PC-3 (cell line): ENCODE measurements at regions of chr3 and their contacts with region 1.

Region 1: GRCh38 chr3:84265768-84266167 is 693.0 kb upstream of the CADM2 start:
- DNase-seq: peak; percentile 93
- ATAC-seq: peak; percentile 98
- H3K4me3 ChIP-seq: no peak overlapping the region
- H3K27ac ChIP-seq: peak overlapping the region; percentile 98
- H3K4me1 ChIP-seq: peaks cover 14% of the 10 kb centered on the region
- H3K27me3 ChIP-seq: no peaks in the 10 kb centered on the region
- CTCF ChIP-seq: no peak

Region 2: GRCh38 chr3:83882701-83883100 is 383.1 kb before region 1 on chr3:
- CTCF ChIA-PET with region 1: no interaction called
- POLR2A ChIA-PET with region 1: no interaction called
- intact Hi-C with region 1: loop called (anchors 5 kb)
- DNase-seq: peak; percentile 81
- ATAC-seq: peak; percentile 96
- H3K4me3 ChIP-seq: peak overlapping the region; percentile 40; the same call in 1 of the 2 replicates
- H3K27ac ChIP-seq: peak overlapping the region; percentile 90
- H3K4me1 ChIP-seq: peaks cover 30% of the 10 kb centered on the region
- H3K27me3 ChIP-seq: no peaks in the 10 kb centered on the region
- CTCF ChIP-seq: no peak

Region 3: GRCh38 chr3:83953417-83954089 is 312.2 kb before region 1 on chr3:
- CTCF ChIA-PET with region 1: no interaction called
- POLR2A ChIA-PET with region 1: no interaction called
- intact Hi-C with region 1: loop called (anchors 10 kb)
- DNase-seq: peak; percentile 85
- ATAC-seq: peak; percentile 96
- H3K4me3 ChIP-seq: peak overlapping the region; percentile 8; the same call in 1 of the 2 replicates
- H3K27ac ChIP-seq: peak overlapping the region; percentile 85
- H3K4me1 ChIP-seq: peaks cover 19% of the 10 kb centered on the region
- H3K27me3 ChIP-seq: no peaks in the 10 kb centered on the region
- CTCF ChIP-seq: no peak

Region 4: DNA sequence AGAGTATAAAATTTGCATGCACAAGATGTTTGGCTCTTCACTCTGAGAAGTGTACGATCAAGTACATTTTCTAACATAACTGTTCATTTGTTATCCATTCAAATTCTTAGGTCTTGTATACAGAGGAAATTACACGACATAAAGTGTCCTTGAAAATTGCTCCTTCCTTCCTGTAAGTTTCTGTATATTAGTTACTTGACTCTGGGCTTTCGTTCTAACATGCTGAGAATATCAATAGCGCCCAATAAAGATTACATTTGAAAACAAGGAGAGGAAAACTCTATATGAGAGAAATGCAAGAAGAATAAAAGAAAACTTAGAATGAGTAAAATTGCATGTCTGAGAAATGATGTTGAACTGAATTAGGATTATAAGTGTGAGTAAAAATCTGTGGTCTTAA is 29.5 kb before region 1 on chr3:
- CTCF ChIA-PET with region 1: no interaction called
- POLR2A ChIA-PET with region 1: interaction called, 10 read pairs
- intact Hi-C with region 1: no loop called
- DNase-seq: no peak
- ATAC-seq: peak; percentile 15; the same call in 1 of the 2 replicates
- H3K4me3 ChIP-seq: peak overlapping the region; percentile 39
- H3K27ac ChIP-seq: no peak overlapping the region
- H3K4me1 ChIP-seq: no peaks in the 10 kb centered on the region
- H3K27me3 ChIP-seq: no peaks in the 10 kb centered on the region
- CTCF ChIP-seq: no peak